Dorsolateral prefrontal cortex (tissue), 120 donors: ENCODE measurements at regions of chr7 and their contacts with region 1.

Region 1: GRCh38 chr7:32957326-32958045 is at the start of gene FKBP9:
- DNase-seq: peak; percentile 36 to 84 (median 60)
- H3K4me3 ChIP-seq: peak within 1 kb of the TSS; percentile 61 to 97 (median 83)
- H3K27ac ChIP-seq: peak within 1 kb of the TSS in 57 of 59 donors; percentile 0 to 92 (median 80)
- H3K27me3 ChIP-seq: no peaks in the 10 kb centered on the region
- CTCF ChIP-seq: peak in 7 of 56 donors; percentile 5 to 25 (median 21)
- total RNA-seq, gene FKBP9: 35.3 to 82.7 (median 58.0) TPM

Region 2: DNA sequence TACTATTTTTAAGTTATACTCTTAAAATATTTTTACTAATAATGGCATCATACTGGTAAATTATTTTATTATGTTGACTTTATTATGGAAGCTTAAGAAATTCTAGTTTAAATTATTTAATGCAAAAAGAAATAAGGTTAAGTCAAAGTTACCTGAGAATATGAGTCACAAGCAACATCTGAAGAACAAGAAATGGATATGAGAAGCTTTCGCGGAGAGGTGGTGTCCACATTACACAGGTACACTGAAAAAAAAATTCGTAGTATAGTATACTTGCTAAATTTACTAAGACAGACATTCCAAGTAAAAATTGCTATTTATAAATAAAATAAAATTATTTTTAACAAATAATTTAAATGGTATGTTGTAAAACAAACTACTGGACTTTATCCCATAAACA is 318.4 kb before region 1 on chr7:
- intact Hi-C with region 1: no loop called
- DNase-seq: no peak
- H3K4me3 ChIP-seq: no peak overlapping the region
- H3K27ac ChIP-seq: no peak overlapping the region
- H3K27me3 ChIP-seq: no peaks in the 10 kb centered on the region
- CTCF ChIP-seq: no peak

Region 3: DNA sequence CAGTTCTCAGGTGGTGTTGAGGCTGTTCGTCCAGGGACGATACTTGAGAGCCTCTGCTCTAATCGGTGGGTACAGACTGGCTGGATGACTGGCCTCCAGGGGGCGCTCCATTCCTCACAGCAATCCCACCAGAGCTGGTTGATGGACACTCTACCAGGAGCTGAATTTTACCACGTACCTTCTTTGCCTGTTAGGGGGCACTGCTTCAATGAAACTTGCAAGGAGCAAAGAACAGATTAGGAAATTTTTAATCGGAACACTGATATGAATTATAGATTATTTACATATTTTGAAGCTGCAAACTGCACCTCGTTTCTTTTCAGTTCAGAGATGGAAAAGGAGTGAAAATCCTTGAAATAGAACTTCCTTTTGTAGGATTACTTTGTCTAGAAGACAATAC is 110.8 kb before region 1 on chr7:
- intact Hi-C with region 1: no loop called
- DNase-seq: peak; percentile 46 to 93 (median 76)
- H3K4me3 ChIP-seq: peak overlapping the region in 26 of 59 donors; percentile 2 to 43 (median 18)
- H3K27ac ChIP-seq: no peak overlapping the region
- H3K27me3 ChIP-seq: no peaks in the 10 kb centered on the region
- CTCF ChIP-seq: peak; percentile 34 to 96 (median 87)

Region 4: DNA sequence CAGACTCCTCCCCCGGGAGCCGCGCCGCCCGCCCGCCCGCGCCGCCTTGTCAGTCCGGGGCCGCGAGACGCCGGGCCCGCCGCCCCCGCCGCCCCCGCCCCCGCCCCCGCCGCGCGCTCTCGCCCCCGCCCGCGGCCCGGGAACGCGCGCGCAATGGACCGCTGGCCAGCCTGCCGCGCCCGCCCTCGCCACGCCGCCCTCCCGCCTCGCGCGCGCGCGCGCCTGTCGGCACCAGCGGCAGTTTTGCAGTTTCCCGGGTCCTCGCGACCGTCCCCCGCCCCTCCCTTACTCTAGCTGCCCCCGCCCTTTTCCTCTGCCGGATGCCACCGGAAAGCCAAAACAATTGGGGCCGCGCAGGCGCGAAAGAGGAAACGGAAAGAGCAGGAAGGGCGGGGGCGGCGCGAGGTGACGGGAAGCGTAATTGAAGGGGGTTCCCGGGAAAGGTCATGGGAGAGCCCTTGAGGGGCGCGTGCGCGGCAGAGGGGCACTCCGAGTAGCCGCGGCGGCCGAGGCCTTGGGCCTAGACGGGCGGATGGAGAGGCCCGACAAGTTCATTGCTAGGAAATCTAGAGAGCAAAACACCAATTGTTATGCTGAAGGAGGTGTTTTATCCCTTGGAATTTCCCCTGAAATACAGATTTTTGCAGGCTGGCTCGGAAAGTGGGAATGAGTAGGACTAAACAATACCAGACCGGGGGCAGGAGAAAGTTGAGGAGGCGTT is 65.5 kb before region 1 on chr7:
- intact Hi-C with region 1: loop called in 1 of 2 experiments (anchors 5 kb)
- DNase-seq: peak; percentile 89 to 97 (median 94)
- H3K4me3 ChIP-seq: peak overlapping the region; percentile 51 to 98 (median 77)
- H3K27ac ChIP-seq: peak overlapping the region; percentile 80 to 100 (median 97)
- H3K27me3 ChIP-seq: no peaks in the 10 kb centered on the region
- CTCF ChIP-seq: peak in 9 of 56 donors; percentile 4 to 20 (median 7)

Region 5: DNA sequence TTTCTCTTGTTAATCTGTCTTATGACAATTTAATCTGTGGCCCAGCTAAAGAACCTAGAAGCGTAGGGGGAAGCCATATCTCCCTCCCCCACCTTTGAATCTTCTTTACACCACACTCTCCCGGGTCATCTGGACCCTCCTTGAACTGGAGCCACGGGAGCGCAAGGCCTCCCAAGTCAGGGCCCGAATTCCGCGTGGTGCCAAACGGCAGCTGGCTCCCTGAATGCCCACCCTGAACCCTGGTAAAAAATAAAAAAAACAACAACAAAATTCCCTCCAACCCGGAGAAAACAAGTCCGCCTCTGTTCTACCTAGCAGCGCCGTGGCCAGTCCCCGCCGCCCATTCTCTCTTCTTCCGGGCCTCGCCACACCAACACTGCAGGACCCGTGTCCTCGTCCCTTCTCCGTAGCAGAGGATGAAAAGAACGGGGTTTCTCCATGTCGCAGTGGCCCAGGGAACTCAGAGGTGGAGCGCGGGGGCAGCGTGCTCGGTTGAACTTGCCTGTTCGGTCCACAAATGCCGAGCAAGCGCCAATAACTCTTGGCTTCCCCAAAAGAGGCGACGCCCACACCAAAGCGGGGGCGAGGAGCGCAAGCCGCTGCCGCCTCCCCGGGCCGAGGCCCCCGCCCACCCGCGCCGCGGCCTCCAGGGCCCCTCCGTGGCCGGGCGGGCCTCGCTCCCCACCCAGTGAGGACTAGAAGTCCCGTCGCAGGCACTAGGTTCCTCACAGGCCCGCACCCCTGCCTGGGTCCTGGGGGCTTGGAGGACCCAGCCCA is 15.3 kb before region 1 on chr7:
- intact Hi-C with region 1: no loop called
- DNase-seq: peak in 7 of 10 donors; percentile 28 to 74 (median 54)
- H3K4me3 ChIP-seq: peak overlapping the region; percentile 58 to 91 (median 81)
- H3K27ac ChIP-seq: peak overlapping the region; percentile 59 to 99 (median 95)
- H3K27me3 ChIP-seq: no peaks in the 10 kb centered on the region
- CTCF ChIP-seq: peak in 1 of 56 donors; percentile 8